T-cell (primary cell): ENCODE measurements at regions of chr5 and their contacts with region 1.

Region 1: DNA sequence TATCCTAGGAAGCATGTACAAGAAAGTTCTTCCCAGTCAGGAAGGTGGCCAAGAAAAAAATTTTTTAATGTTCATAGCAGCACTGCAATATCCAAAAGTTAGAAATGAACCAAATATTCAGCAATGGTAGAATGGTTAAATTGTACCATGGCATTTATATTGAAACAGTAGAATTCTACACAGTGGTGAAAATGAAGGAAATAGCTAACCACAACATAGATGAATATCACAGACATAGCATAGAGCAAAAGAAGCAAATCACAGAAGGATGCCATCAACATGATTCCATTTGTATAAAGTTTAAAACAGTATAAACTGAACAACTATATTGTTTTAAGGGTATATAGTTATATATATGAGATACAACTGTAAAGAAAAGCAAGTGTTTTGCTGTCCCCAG is 10.7 kb upstream of the ANKDD1B start:
- DNase-seq: no peak
- ATAC-seq: no peak
- H3K4me3 ChIP-seq: no peak overlapping the region
- H3K4me3 Mint-ChIP-seq: no peak overlapping the region
- H3K27ac ChIP-seq: no peak overlapping the region
- H3K27ac Mint-ChIP-seq: no peak overlapping the region
- H3K4me1 ChIP-seq: peaks cover 0 to 7% of the 10 kb centered on the region in 2 experiments
- H3K4me1 Mint-ChIP-seq: peaks cover 8 to 16% (median 13%) of the 10 kb centered on the region in 3 donors
- H3K27me3 ChIP-seq: no peaks in the 10 kb centered on the region
- H3K27me3 Mint-ChIP-seq: no peaks in the 10 kb centered on the region

Region 2: DNA sequence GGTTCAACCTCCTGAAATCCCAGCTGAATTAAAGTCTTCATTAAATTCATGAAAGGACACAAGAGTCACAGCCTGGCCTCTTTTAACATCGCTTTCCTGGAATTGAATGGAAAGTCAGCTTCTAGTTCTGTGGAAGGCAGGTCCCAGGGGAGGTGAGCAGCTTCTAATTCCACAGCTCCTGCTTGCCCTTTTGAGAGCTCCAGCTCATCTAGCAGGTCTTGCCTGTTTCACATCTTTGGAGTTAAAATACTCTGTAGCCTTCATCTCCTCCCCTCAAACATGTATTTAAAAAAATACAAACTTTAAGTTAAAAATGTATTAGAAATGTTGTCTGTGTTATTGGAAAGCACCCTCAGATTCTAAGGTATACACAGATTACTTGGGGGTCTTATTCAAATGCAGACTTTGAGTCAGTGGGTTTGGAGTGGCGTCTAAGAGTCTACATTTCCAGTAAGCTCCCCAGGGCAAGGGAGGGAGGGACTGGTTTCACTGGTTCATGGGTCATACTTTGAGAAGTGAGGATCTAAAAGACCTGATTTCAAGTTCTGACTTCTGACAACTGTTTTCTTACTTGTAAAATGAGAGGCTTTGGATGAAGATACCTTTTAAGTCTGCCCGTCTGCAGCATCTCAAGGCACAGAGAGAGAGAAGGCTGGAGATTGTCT is 591.4 kb after region 1 on chr5:
- CTCF ChIA-PET with region 1: no interaction called
- POLR2A ChIA-PET with region 1: interaction called in 1 of 2 experiments, 11 read pairs
- DNase-seq: no peak
- ATAC-seq: no peak
- H3K4me3 ChIP-seq: no peak overlapping the region
- H3K4me3 Mint-ChIP-seq: no peak overlapping the region
- H3K27ac ChIP-seq: no peak overlapping the region
- H3K27ac Mint-ChIP-seq: no peak overlapping the region
- H3K4me1 ChIP-seq: no peaks in the 10 kb centered on the region
- H3K4me1 Mint-ChIP-seq: no peaks in the 10 kb centered on the region
- H3K27me3 ChIP-seq: peaks cover 0 to 3% of the 10 kb centered on the region in 2 experiments
- H3K27me3 Mint-ChIP-seq: peaks cover 3 to 9% of the 10 kb centered on the region in 2 donors